IMR-90 (cell line): ENCODE measurements at regions of chr11 and their contacts with region 1.

Region 1: DNA sequence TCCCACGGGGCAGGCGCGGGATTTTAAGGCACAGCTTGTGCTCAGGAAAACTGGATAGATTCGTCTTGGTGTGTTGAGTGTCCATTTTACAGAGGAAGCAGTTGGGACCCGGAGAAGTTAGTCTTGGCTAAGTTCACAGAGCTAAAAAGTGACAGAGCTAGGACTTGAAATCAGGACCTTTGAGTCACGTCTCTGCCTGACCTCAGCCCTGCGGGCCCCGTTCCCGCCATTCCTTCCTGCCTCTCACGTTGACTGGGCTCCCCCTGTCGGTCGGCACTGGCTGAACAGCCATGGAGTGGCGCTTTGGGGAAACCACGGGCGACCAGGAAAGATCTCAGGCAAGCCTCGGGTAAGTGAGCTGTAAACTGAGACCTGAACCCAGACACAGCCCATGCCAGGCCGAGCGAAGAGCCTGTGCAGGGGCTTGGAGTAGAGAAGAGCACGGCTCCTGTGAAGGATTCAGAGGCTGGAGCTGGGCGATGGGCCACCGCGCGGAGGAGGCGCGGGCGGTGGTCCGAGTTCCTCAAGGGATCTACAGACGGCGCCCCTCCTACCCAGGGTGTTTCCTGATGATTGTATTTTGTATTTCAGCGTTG is 54.1 kb downstream of the WNT11 start:
- DNase-seq: peak; percentile 65
- ATAC-seq: peak; percentile 91
- H3K4me3 ChIP-seq: no peak overlapping the region
- H3K27ac ChIP-seq: no peak overlapping the region
- H3K4me1 ChIP-seq: no peaks in the 10 kb centered on the region
- H3K27me3 ChIP-seq: peaks cover 10% of the 10 kb centered on the region; the same call in 1 of the 2 replicates
- CTCF ChIP-seq: peak; percentile 95
- POLR2A ChIP-seq: no peak
- RAD21 ChIP-seq: peak; percentile 94

Region 2: GRCh38 chr11:75802913-75803820 is 349.0 kb before region 1 on chr11:
- CTCF ChIA-PET with region 1: no interaction called
- POLR2A ChIA-PET with region 1: no interaction called
- dilution Hi-C with region 1: no loop called
- in situ Hi-C with region 1: no loop called
- intact Hi-C with region 1: loop called (anchors 5 kb)
- DNase-seq: peak; percentile 65
- ATAC-seq: peak; percentile 99
- H3K4me3 ChIP-seq: no peak overlapping the region
- H3K27ac ChIP-seq: no peak overlapping the region
- H3K4me1 ChIP-seq: no peaks in the 10 kb centered on the region
- H3K27me3 ChIP-seq: no peaks in the 10 kb centered on the region
- CTCF ChIP-seq: peak; percentile 91
- POLR2A ChIP-seq: no peak
- RAD21 ChIP-seq: peak; percentile 88

Region 3: GRCh38 chr11:75896843-75897419 is 255.3 kb before region 1 on chr11:
- CTCF ChIA-PET with region 1: interaction called, 23 read pairs
- POLR2A ChIA-PET with region 1: no interaction called
- dilution Hi-C with region 1: no loop called
- in situ Hi-C with region 1: loop called (anchors 5 kb)
- intact Hi-C with region 1: loop called (anchors 1 kb)
- DNase-seq: peak; percentile 55
- ATAC-seq: peak; percentile 62
- H3K4me3 ChIP-seq: no peak overlapping the region
- H3K27ac ChIP-seq: no peak overlapping the region
- H3K4me1 ChIP-seq: no peaks in the 10 kb centered on the region
- H3K27me3 ChIP-seq: no peaks in the 10 kb centered on the region
- CTCF ChIP-seq: peak; percentile 76
- POLR2A ChIP-seq: no peak
- RAD21 ChIP-seq: peak; percentile 85

Region 4: DNA sequence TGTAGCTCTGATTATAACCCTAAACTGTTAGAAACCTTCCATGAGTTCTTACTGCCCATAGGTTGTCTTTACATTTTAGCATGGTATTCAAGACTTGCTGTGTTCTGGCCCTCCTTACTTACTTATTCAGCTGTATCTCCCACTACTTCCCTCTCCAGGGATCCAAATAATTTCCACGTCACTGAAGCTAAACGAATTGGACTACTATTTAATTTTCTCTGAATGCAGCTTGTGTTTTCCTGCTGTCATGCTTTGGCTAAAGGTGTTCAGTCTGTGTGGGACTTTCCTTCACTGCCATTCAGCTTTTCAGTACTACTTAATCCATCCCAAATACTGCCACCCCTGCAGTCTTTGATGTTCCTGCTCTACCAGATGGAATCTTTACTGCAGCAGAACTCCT is 248.9 kb before region 1 on chr11:
- CTCF ChIA-PET with region 1: interaction called, 14 read pairs
- POLR2A ChIA-PET with region 1: no interaction called
- dilution Hi-C with region 1: no loop called
- in situ Hi-C with region 1: no loop called
- intact Hi-C with region 1: no loop called
- DNase-seq: no peak
- ATAC-seq: no peak
- H3K4me3 ChIP-seq: no peak overlapping the region
- H3K27ac ChIP-seq: no peak overlapping the region
- H3K4me1 ChIP-seq: no peaks in the 10 kb centered on the region; the same call in 1 of the 2 replicates
- H3K27me3 ChIP-seq: no peaks in the 10 kb centered on the region
- CTCF ChIP-seq: no peak
- POLR2A ChIP-seq: no peak
- RAD21 ChIP-seq: no peak

Region 5: GRCh38 chr11:76205252-76206076 is 53.3 kb after region 1 on chr11:
- CTCF ChIA-PET with region 1: no interaction called
- POLR2A ChIA-PET with region 1: no interaction called
- dilution Hi-C with region 1: no loop called
- in situ Hi-C with region 1: no loop called
- intact Hi-C with region 1: no loop called
- DNase-seq: no peak
- ATAC-seq: no peak
- H3K4me3 ChIP-seq: no peak overlapping the region
- H3K27ac ChIP-seq: no peak overlapping the region
- H3K4me1 ChIP-seq: no peaks in the 10 kb centered on the region; the same call in 1 of the 2 replicates
- H3K27me3 ChIP-seq: peaks cover 78% of the 10 kb centered on the region
- CTCF ChIP-seq: no peak
- POLR2A ChIP-seq: no peak
- RAD21 ChIP-seq: no peak